ENCODE measurements at regions of chr10 and their contacts with region 1.

Region 1: GRCh38 chr10:48656241-48656913 is 28.3 kb upstream of the WDFY4 start:
- DNase-seq: peak; percentile 97
- H3K4me3 ChIP-seq: peak overlapping the region; percentile 69 to 71
- H3K27ac ChIP-seq: peak overlapping the region; percentile 69 to 74; a peak in 2 of 4 replicates
- H3K4me1 ChIP-seq: peaks cover 5 to 20% of the 10 kb centered on the region in 2 experiments; a peak in 2 of 4 replicates
- H3K27me3 ChIP-seq: no peaks in the 10 kb centered on the region
- CTCF ChIP-seq: peak; percentile 85
- EP300 ChIP-seq: peak in 1 of 2 experiments; percentile 26; a peak in 1 of 4 replicates
- RAD21 ChIP-seq: peak; percentile 93

Region 2: DNA sequence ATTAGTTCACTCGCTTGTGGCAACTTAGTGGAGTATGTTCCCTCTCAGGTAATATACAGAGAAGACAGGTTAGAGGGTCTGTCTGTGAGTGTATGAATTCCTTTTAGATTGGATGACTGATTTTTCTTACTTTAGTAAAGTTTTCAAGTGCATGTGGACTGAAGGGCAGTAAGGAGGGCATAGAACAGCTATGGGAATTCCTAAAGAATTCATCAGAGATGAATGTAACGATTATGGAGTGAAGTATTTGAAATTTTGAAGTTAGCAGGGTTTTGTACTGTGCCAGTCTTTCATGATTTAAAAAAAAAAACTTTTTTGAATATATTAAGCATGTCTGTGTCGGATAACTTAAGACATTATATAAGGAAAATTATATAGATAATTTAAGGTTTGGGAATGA is 334.4 kb before region 1 on chr10:
- CTCF ChIA-PET with region 1: interaction called, 10 read pairs
- POLR2A ChIA-PET with region 1: no interaction called
- DNase-seq: no peak
- H3K4me3 ChIP-seq: no peak overlapping the region
- H3K27ac ChIP-seq: peak overlapping the region in 1 of 2 experiments; percentile 51; a peak in 2 of 4 replicates
- H3K4me1 ChIP-seq: peaks cover 0 to 4% of the 10 kb centered on the region in 2 experiments; a peak in 1 of 4 replicates
- H3K27me3 ChIP-seq: no peaks in the 10 kb centered on the region
- CTCF ChIP-seq: no peak
- EP300 ChIP-seq: no peak
- RAD21 ChIP-seq: no peak

Region 3: GRCh38 chr10:48444266-48444665 is 212.1 kb before region 1 on chr10:
- CTCF ChIA-PET with region 1: interaction called, 94 read pairs
- POLR2A ChIA-PET with region 1: no interaction called
- DNase-seq: peak; percentile 75
- H3K4me3 ChIP-seq: no peak overlapping the region
- H3K27ac ChIP-seq: peak overlapping the region in 1 of 2 experiments; percentile 36; a peak in 2 of 4 replicates
- H3K4me1 ChIP-seq: peaks cover 12 to 29% of the 10 kb centered on the region in 2 experiments; a peak in 3 of 4 replicates
- H3K27me3 ChIP-seq: no peaks in the 10 kb centered on the region
- CTCF ChIP-seq: peak; percentile 34; the same call in 1 of the 2 replicates
- EP300 ChIP-seq: peak in 1 of 2 experiments; percentile 53; a peak in 1 of 4 replicates
- RAD21 ChIP-seq: peak; percentile 81

Region 4: DNA sequence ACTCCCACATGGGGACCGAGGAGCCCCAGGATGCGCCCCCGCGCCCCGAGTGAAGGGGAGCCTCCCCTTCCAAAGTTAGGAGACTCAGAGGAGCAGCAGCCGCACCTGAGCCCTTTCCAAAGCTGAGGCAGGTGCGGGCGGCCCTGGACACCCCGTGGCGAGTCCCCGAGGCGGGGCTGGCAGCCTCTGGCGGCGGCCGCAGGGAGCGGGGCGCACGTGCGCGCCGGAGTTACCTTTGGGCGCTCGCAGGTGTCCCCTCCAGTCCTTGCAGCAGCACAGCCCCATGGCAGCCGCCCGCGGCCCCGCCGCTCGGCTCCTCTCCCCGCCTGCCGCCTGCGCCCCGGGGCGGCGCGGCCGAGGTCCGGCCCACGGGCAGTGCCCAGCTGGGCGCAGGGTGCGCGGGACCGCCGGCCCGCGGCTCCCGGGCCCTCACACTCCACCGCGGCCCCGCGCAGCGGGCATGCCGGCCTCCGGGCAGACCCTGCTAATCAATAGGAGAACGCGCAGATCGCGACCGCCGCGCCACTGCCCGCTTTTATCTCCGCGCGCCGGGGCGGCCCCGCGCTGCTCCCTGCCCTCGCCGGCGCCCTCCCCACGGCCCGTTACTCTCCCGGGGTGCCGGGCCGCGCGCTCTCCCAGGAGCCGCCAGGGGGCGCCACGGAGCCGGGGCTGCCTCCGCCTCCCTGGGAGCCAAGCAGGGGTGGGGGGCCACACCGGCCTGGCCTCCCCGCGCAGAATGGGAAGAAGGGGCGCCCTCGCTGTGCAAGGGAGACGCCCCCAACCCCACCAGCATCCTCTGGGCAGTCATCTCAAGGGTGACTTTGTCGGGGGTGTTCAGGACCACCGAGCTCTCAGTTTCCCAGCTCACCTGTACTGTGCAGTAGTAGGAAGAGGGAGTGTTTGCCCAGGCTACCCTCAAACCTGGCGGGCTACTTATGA is 132.3 kb before region 1 on chr10:
- CTCF ChIA-PET with region 1: interaction called, 60 read pairs
- POLR2A ChIA-PET with region 1: no interaction called
- DNase-seq: peak; percentile 95
- H3K4me3 ChIP-seq: peak overlapping the region; percentile 59 to 65
- H3K27ac ChIP-seq: peak overlapping the region in 1 of 2 experiments; percentile 42; a peak in 2 of 4 replicates
- H3K4me1 ChIP-seq: peaks cover 23 to 28% of the 10 kb centered on the region in 2 experiments; a peak in 3 of 4 replicates
- H3K27me3 ChIP-seq: no peaks in the 10 kb centered on the region
- CTCF ChIP-seq: peak; percentile 69
- EP300 ChIP-seq: no peak
- RAD21 ChIP-seq: peak; percentile 43

Region 5: GRCh38 chr10:48598243-48598935 is 58.0 kb before region 1 on chr10:
- CTCF ChIA-PET with region 1: interaction called, 148 read pairs
- POLR2A ChIA-PET with region 1: no interaction called
- DNase-seq: no peak
- H3K4me3 ChIP-seq: no peak overlapping the region
- H3K27ac ChIP-seq: no peak overlapping the region
- H3K4me1 ChIP-seq: peaks cover 0 to 31% of the 10 kb centered on the region in 2 experiments; a peak in 2 of 4 replicates
- H3K27me3 ChIP-seq: no peaks in the 10 kb centered on the region
- CTCF ChIP-seq: no peak
- EP300 ChIP-seq: no peak
- RAD21 ChIP-seq: no peak

Region 6: DNA sequence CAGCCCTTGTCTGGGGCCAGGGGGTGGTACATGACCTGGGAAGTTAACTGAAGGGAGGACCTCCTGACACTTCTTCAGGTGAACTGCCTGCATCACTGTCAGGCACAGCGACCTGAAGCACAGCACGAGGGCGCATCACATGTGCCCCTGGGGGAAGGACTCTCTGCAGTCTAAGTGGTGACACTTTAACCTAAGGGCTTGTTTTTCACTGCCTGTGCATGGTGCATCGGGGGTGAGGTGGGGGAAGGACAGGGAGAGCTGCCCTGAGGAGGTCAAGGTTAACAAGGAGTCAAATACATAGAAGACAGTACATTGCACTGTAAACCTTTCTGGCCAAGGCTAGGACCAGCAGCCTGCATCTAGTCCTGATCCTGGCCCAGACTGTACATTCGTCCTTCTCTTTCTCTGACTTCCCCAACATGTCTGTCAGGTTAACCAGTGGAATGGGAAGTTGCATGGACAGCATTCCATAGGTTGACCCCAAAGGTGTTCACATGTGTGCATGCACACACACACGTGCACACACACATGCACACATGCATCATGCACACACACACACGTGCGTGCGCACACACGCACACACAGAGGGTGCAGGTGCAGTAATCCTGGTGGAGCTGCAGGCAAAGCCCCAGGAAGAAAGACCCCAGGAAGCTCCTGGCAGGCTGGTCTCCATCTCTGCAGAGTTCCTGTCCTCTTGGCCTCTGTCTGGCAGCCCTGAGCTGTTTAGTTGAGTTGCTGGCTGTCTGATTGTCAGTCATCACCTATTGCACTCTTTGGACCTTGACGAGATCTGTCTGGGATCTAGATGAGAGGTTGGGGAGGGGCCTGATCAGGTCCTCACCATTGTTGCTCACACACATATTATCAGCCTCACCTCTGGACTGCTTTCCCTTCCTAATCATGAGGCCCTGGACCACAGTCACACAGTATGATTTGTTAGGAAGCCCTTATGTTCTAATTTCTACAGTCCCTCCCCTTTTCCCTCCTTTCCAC is 66.1 kb after region 1 on chr10:
- CTCF ChIA-PET with region 1: no interaction called
- POLR2A ChIA-PET with region 1: no interaction called
- DNase-seq: no peak
- H3K4me3 ChIP-seq: no peak overlapping the region
- H3K27ac ChIP-seq: no peak overlapping the region
- H3K4me1 ChIP-seq: peaks cover 0 to 10% of the 10 kb centered on the region in 2 experiments; a peak in 1 of 4 replicates
- H3K27me3 ChIP-seq: no peaks in the 10 kb centered on the region
- CTCF ChIP-seq: no peak
- EP300 ChIP-seq: no peak
- RAD21 ChIP-seq: no peak

Region 7: GRCh38 chr10:48885383-48885782 is 229.0 kb after region 1 on chr10:
- CTCF ChIA-PET with region 1: interaction called, 11 read pairs
- POLR2A ChIA-PET with region 1: no interaction called
- DNase-seq: peak; percentile 70
- H3K4me3 ChIP-seq: no peak overlapping the region; a peak in 1 of 4 replicates
- H3K27ac ChIP-seq: no peak overlapping the region
- H3K4me1 ChIP-seq: no peaks in the 10 kb centered on the region; a peak in 1 of 4 replicates
- H3K27me3 ChIP-seq: no peaks in the 10 kb centered on the region
- CTCF ChIP-seq: no peak
- EP300 ChIP-seq: no peak
- RAD21 ChIP-seq: peak; percentile 82

Region 8: DNA sequence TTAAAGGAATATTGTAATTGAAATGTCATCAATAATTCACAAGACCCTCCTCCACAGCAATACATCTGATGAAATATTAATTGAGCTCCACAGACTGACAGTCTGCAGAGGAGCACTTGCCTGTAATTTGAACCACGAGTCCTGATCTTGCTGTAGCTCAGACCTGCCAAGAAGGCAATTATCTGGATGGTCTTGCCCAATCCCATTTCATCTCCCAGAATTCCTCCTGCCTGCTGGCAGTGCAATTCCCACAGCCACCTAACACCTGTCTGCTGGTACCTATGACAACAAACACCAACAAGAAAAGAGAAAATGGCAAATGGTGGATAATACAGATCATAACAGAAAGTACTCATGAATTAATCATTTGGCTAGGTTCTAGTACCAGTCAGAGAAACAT is 844.0 kb after region 1 on chr10:
- CTCF ChIA-PET with region 1: interaction called, 14 read pairs
- POLR2A ChIA-PET with region 1: no interaction called
- DNase-seq: no peak
- H3K4me3 ChIP-seq: no peak overlapping the region
- H3K27ac ChIP-seq: no peak overlapping the region
- H3K4me1 ChIP-seq: peaks cover 0 to 15% of the 10 kb centered on the region in 2 experiments; a peak in 2 of 4 replicates
- H3K27me3 ChIP-seq: no peaks in the 10 kb centered on the region
- CTCF ChIP-seq: no peak
- EP300 ChIP-seq: no peak
- RAD21 ChIP-seq: no peak

Measured in SK-N-SH (cell line).